GM12878 (cell line): ENCODE measurements at regions of chr6 and their contacts with region 1.

Region 1: GRCh38 chr6:139364302-139364981 is 10.0 kb downstream of the CITED2 start:
- DNase-seq: peak; percentile 48
- ATAC-seq: peak; percentile 79
- H3K4me3 ChIP-seq: no peak overlapping the region
- H3K27ac ChIP-seq: no peak overlapping the region
- H3K4me1 ChIP-seq: no peaks in the 10 kb centered on the region
- H3K27me3 ChIP-seq: no peaks in the 10 kb centered on the region
- CTCF ChIP-seq: peak; percentile 42 to 71 (median 48); a peak in 5 of 6 replicates
- EP300 ChIP-seq: no peak
- POLR2A ChIP-seq: no peak
- RAD21 ChIP-seq: peak; percentile 92

Region 2: GRCh38 chr6:138817822-138818308 is 546.6 kb before region 1 on chr6:
- CTCF ChIA-PET with region 1: interaction called, 63 read pairs
- POLR2A ChIA-PET with region 1: no interaction called
- RAD21 ChIA-PET with region 1: interaction called, 46 read pairs
- SMC1A ChIA-PET with region 1: interaction called, 38 read pairs
- in situ Hi-C with region 1: loop called (anchors 5 kb)
- intact Hi-C with region 1: loop called (anchors 1 kb)
- DNase-seq: no peak
- ATAC-seq: peak; percentile 51
- H3K4me3 ChIP-seq: no peak overlapping the region
- H3K27ac ChIP-seq: no peak overlapping the region; the same call in 1 of the 2 replicates
- H3K4me1 ChIP-seq: peaks cover 18% of the 10 kb centered on the region
- H3K27me3 ChIP-seq: no peaks in the 10 kb centered on the region
- CTCF ChIP-seq: no peak
- EP300 ChIP-seq: no peak
- POLR2A ChIP-seq: no peak
- RAD21 ChIP-seq: no peak

Region 3: GRCh38 chr6:139117734-139118133 is 246.7 kb before region 1 on chr6:
- CTCF ChIA-PET with region 1: interaction called, 10 read pairs
- POLR2A ChIA-PET with region 1: no interaction called
- RAD21 ChIA-PET with region 1: interaction called, 5 read pairs
- SMC1A ChIA-PET with region 1: interaction called, 41 read pairs
- in situ Hi-C with region 1: no loop called
- intact Hi-C with region 1: no loop called
- DNase-seq: no peak
- ATAC-seq: no peak
- H3K4me3 ChIP-seq: no peak overlapping the region
- H3K27ac ChIP-seq: no peak overlapping the region
- H3K4me1 ChIP-seq: no peaks in the 10 kb centered on the region
- H3K27me3 ChIP-seq: no peaks in the 10 kb centered on the region; a peak in 1 of 4 replicates
- CTCF ChIP-seq: no peak
- EP300 ChIP-seq: no peak
- POLR2A ChIP-seq: no peak
- RAD21 ChIP-seq: no peak

Region 4: GRCh38 chr6:139219271-139219729 is 145.1 kb before region 1 on chr6:
- CTCF ChIA-PET with region 1: interaction called, 254 read pairs
- POLR2A ChIA-PET with region 1: interaction called, 8 read pairs
- RAD21 ChIA-PET with region 1: interaction called, 245 read pairs
- SMC1A ChIA-PET with region 1: interaction called, 236 read pairs
- in situ Hi-C with region 1: no loop called
- intact Hi-C with region 1: loop called (anchors 1 kb)
- DNase-seq: peak; percentile 82
- ATAC-seq: peak; percentile 100
- H3K4me3 ChIP-seq: no peak overlapping the region
- H3K27ac ChIP-seq: peak overlapping the region; percentile 20; the same call in 1 of the 2 replicates
- H3K4me1 ChIP-seq: peaks cover 3% of the 10 kb centered on the region; the same call in 1 of the 2 replicates
- H3K27me3 ChIP-seq: no peaks in the 10 kb centered on the region
- CTCF ChIP-seq: peak; percentile 88 to 99 (median 93); a peak in 5 of 6 replicates
- EP300 ChIP-seq: peak in 1 of 2 experiments; percentile 25; a peak in 1 of 4 replicates
- POLR2A ChIP-seq: peak; percentile 44; the same call in 1 of the 2 replicates
- RAD21 ChIP-seq: peak; percentile 99

Region 5: DNA sequence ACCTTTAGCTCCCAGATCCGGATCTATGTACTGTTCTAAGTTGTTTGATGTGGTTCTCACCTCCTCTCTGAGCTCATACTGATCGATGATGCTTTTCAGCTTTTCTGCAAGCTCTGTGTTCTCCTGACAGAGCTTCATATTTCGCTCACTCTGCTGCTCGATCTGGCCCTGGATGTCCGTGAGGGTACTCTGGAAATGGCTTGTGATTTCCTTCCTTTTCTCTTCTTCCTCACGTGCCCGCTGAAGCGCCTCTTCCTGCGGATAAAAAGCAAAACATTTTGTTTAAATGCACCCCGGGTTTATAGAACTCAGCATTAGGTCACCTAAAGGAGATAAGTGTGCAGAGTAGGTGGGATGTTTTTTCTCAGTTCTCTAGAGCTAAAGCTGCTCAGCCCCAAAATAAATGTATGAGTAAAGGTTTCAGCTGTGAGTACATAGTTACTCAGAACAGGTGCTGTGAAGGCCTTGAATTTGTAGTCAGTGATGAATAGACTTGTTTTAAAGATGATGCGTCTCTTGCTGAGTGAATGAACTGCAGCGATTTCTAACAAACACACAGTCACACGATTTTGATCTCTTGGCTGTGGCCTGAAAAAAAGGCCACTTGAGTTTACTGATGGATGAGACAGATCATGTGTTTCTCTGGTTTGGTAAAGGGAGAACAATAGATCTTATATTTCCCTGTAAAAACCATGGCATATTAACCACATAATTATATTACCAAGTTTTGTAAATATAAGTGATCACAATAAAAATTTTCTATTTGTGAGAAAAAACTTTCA is 101.7 kb before region 1 on chr6:
- CTCF ChIA-PET with region 1: interaction called, 9 read pairs
- POLR2A ChIA-PET with region 1: no interaction called
- RAD21 ChIA-PET with region 1: interaction called, 11 read pairs
- SMC1A ChIA-PET with region 1: interaction called, 11 read pairs
- in situ Hi-C with region 1: no loop called
- intact Hi-C with region 1: no loop called
- DNase-seq: no peak
- ATAC-seq: peak; percentile 94
- H3K4me3 ChIP-seq: no peak overlapping the region
- H3K27ac ChIP-seq: no peak overlapping the region
- H3K4me1 ChIP-seq: no peaks in the 10 kb centered on the region
- H3K27me3 ChIP-seq: no peaks in the 10 kb centered on the region
- CTCF ChIP-seq: no peak
- EP300 ChIP-seq: peak in 1 of 2 experiments; percentile 15; a peak in 1 of 4 replicates
- POLR2A ChIP-seq: no peak
- RAD21 ChIP-seq: no peak

Region 6: DNA sequence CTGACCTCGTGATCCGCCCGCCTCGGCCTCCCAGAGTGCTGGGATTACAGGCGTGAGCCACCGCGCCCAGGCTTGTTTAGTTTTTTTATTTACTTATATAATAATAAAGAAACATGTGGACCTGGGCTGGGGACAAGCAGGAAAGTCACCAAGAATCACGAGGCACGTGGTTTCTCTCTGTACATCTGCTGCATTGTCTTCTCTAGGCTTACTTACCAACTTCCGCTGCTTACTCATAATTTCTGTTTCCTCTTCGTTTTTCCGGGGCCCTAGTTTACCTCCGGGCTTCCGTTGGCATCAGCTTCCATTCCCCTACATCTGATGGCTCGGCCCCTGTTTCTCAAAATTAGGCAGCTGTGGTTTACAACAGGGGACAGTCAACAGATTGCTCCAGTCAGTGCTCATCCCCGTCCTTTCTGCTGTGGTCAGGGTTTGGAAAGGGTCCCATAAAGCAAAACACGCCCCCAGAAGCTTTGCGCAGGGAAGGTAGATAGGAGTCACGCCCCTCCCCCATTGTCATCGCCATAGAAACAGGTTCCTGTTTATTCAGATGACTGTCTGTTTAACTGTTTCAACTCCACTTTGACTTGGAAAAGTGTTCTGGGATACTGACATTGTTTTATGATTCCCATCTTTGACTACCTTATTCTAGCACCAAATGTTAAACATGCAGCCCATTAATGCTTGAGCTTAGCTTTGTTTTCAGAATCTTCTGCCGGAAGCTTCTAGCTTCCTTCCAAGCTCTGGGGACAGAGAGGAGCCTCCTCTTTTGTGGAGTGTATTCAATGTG is 40.7 kb before region 1 on chr6:
- CTCF ChIA-PET with region 1: interaction called, 11 read pairs
- POLR2A ChIA-PET with region 1: no interaction called
- RAD21 ChIA-PET with region 1: interaction called, 10 read pairs
- SMC1A ChIA-PET with region 1: interaction called, 9 read pairs
- in situ Hi-C with region 1: no loop called
- intact Hi-C with region 1: no loop called
- DNase-seq: no peak
- ATAC-seq: peak; percentile 42
- H3K4me3 ChIP-seq: no peak overlapping the region
- H3K27ac ChIP-seq: peak overlapping the region; percentile 34; the same call in 1 of the 2 replicates
- H3K4me1 ChIP-seq: peaks cover 27% of the 10 kb centered on the region
- H3K27me3 ChIP-seq: no peaks in the 10 kb centered on the region
- CTCF ChIP-seq: no peak
- EP300 ChIP-seq: 0 out of 4 replicates have a peak, but pooled peaks of 1 of the 2 experiments have one; percentile 38
- POLR2A ChIP-seq: no peak
- RAD21 ChIP-seq: no peak

Region 7: GRCh38 chr6:139457476-139457875 is 93.0 kb after region 1 on chr6:
- CTCF ChIA-PET with region 1: no interaction called
- POLR2A ChIA-PET with region 1: no interaction called
- RAD21 ChIA-PET with region 1: no interaction called
- SMC1A ChIA-PET with region 1: no interaction called
- in situ Hi-C with region 1: no loop called
- intact Hi-C with region 1: no loop called
- DNase-seq: no peak
- ATAC-seq: no peak
- H3K4me3 ChIP-seq: no peak overlapping the region
- H3K27ac ChIP-seq: no peak overlapping the region
- H3K4me1 ChIP-seq: no peaks in the 10 kb centered on the region
- H3K27me3 ChIP-seq: no peaks in the 10 kb centered on the region; a peak in 1 of 4 replicates
- CTCF ChIP-seq: no peak
- EP300 ChIP-seq: no peak
- POLR2A ChIP-seq: no peak
- RAD21 ChIP-seq: no peak